ENCODE measurements at regions of chr6 and their contacts with region 1.

Region 1: DNA sequence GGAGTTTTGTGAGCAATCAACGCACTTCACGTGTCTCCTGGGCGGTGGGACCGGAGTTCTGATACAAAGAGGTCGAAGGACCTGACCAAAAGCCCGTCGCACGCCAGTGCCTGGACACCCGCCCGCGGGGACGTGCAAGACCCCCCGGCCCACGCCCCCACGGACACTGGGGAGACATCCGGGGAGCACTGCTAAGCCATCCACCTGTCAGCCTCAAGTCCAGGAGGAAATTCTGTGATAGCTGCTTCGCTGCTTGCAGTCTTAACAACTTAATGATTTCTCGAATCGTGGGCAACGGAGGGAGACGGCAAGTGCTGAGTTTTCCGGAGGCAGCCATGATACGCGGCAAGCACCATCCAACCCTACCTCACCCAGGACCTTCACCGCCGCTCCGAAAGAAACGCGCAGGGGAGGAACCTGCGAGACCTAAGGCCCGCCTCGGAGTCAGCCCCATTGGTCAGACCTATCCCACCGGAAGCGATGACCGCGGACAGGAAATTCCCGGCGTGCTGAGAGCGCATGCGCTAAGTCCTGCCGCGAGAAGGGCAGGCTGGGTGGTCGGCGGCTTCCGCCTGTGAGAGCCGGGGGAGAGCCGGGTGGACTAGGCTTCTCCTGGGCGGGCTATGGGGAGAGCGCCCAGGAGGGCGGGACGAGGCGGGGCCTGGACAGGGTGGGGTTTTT is at the start of gene TFB1M:
- DNase-seq: peak; percentile 99
- ATAC-seq: peak; percentile 96
- H3K4me3 ChIP-seq: peak within 1 kb of the TSS; percentile 88
- H3K27ac ChIP-seq: peak within 1 kb of the TSS; percentile 95
- H3K4me1 ChIP-seq: no peaks in the 10 kb centered on the region
- H3K27me3 ChIP-seq: no peaks in the 10 kb centered on the region
- CTCF ChIP-seq: no peak
- EP300 ChIP-seq: 0 out of 4 replicates have a peak, but pooled peaks of 1 of the 2 experiments have one; percentile 30
- POLR2A ChIP-seq: peak; percentile 97
- RAD21 ChIP-seq: no peak
- polyA plus RNA-seq, gene TFB1M: 95.8 to 117 TPM

Region 2: DNA sequence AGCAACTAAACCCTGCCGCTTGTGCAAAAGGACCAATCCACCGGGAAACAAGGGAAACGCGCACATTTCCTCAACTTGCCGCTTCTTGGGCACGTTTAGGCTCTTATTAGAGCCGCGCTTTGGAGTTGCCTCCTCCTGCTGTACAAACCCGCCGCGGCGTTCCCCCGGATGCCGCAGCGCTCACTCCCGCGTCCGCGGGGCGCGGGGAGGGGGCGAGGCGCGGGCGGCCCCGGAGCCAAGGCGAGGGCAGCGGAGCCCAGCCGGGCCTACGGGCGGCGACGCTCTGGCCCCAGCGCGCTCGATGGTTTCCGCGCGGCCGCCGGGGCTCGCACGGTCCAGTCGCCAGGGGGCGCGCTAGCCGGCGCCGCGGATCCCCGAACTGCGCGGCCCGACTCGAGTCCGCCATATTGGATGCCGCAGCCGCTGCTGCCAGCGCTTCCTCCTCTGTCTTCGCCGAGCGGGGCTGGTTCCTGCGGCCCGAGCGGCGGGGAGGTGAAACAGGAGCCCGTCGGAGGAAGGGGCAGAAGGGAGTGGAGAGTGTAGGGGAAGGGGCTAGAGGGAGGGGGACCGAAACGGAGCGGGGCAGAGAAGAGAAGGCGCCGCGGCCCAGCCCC is 581.1 kb before region 1 on chr6 and contains the start of gene SCAF8:
- CTCF ChIA-PET with region 1: no interaction called
- POLR2A ChIA-PET with region 1: no interaction called
- RAD21 ChIA-PET with region 1: no interaction called
- SMC1A ChIA-PET with region 1: no interaction called
- in situ Hi-C with region 1: no loop called
- intact Hi-C with region 1: loop called (anchors 10 kb)
- DNase-seq: peak; percentile 23
- ATAC-seq: peak; percentile 87
- H3K4me3 ChIP-seq: peak within 1 kb of the TSS; percentile 88
- H3K27ac ChIP-seq: peak within 1 kb of the TSS; percentile 96
- H3K4me1 ChIP-seq: peaks cover 5% of the 10 kb centered on the region; the same call in 1 of the 2 replicates
- H3K27me3 ChIP-seq: no peaks in the 10 kb centered on the region
- CTCF ChIP-seq: peak; percentile 73 to 91 (median 73); a peak in 5 of 6 replicates
- EP300 ChIP-seq: peak in 1 of 2 experiments; percentile 45; a peak in 1 of 4 replicates
- POLR2A ChIP-seq: peak; percentile 93
- RAD21 ChIP-seq: peak; percentile 50
- polyA plus RNA-seq, gene SCAF8: 8.1 to 8.5 TPM

Region 3: DNA sequence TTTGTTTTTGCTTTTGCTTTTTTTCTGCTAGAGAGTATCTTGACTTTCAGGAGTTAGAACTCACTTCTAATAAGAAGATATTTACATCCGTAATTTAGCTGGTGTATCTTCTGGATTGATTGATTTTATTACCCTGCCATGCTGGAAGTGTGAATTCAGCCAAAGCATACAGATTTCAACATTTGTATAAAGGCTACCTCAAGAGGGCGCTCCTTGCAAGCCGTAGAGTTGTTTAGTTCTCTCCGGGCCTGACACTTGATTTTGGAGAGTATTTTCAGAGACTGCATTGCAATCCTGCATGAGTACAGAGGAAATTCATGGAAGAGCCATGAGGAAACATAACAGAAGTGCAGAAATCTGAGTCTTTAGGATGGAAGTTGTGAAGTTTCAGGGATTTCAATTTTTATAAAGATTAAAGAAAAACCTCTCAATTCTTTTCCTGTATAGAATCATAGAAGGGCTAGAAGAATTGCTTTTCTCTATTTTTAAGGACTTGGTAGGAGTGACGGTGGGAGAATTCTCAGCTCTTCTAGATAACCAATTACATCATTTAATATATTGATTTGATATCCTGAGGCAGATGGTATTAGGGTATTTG is 385.8 kb before region 1 on chr6:
- CTCF ChIA-PET with region 1: interaction called, 28 read pairs
- POLR2A ChIA-PET with region 1: no interaction called
- RAD21 ChIA-PET with region 1: interaction called, 3 read pairs
- SMC1A ChIA-PET with region 1: interaction called, 4 read pairs
- in situ Hi-C with region 1: no loop called
- intact Hi-C with region 1: no loop called
- DNase-seq: peak; percentile 12
- ATAC-seq: peak; percentile 94
- H3K4me3 ChIP-seq: no peak overlapping the region
- H3K27ac ChIP-seq: no peak overlapping the region
- H3K4me1 ChIP-seq: 0 out of 2 replicates have a peak, but pooled peaks cover 2% of the 10 kb centered on the region
- H3K27me3 ChIP-seq: no peaks in the 10 kb centered on the region
- CTCF ChIP-seq: peak; percentile 72 to 90 (median 76)
- EP300 ChIP-seq: no peak
- POLR2A ChIP-seq: no peak
- RAD21 ChIP-seq: peak; percentile 98

Region 4: DNA sequence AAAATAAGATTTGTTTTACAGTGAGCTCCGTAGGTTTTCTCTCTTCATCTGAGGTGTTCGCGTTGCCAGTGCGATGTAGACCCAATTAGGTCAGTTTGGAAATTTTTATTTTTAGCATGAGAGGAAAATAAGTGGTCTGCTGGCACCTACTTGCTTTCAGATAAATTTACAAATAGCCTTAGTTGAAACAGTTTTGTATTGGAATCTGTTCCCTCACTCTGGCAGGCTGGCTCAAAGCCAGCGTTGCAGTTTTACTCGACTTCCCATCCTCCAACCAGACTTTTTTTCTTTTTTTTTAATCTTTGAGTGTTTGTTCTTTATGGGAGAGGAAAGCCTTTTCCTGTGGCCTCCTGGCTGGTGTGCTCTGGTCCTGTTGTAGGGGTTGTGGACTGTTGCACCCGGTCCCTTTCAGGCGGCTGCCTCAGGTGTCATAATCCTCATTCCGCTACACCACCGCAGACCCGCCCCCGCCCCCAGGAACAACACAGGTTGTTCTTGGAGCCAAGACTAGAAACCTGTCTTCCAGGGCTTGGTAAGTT is 272.4 kb before region 1 on chr6:
- CTCF ChIA-PET with region 1: no interaction called
- POLR2A ChIA-PET with region 1: no interaction called
- RAD21 ChIA-PET with region 1: no interaction called
- SMC1A ChIA-PET with region 1: no interaction called
- in situ Hi-C with region 1: no loop called
- intact Hi-C with region 1: no loop called
- DNase-seq: no peak
- ATAC-seq: no peak
- H3K4me3 ChIP-seq: no peak overlapping the region
- H3K27ac ChIP-seq: no peak overlapping the region
- H3K4me1 ChIP-seq: no peaks in the 10 kb centered on the region
- H3K27me3 ChIP-seq: no peaks in the 10 kb centered on the region; a peak in 1 of 4 replicates
- CTCF ChIP-seq: no peak
- EP300 ChIP-seq: no peak
- POLR2A ChIP-seq: no peak
- RAD21 ChIP-seq: no peak

Region 5: DNA sequence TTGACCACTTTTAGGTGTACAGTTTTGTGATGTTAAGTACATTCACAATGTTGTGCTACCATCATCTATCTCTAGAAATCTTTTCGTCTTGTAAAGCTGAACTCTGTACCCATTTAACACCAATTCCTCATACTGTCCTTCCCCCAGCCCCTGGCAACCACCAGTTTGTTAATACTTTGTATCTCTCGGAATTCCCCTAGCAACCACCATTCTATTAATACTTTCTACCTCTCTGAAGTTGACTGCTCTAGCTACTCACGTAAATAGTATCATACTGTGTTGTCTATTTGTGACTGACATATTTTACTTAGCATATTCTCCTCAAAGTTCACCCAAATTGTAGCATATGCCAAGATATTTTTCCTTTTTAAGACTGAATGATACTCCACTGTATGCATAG is 132.7 kb before region 1 on chr6:
- CTCF ChIA-PET with region 1: interaction called, 54 read pairs
- POLR2A ChIA-PET with region 1: interaction called, 6 read pairs
- RAD21 ChIA-PET with region 1: interaction called, 54 read pairs
- SMC1A ChIA-PET with region 1: interaction called, 51 read pairs
- in situ Hi-C with region 1: no loop called
- intact Hi-C with region 1: loop called (anchors 2 kb)
- DNase-seq: no peak
- ATAC-seq: peak; percentile 60
- H3K4me3 ChIP-seq: 0 out of 2 replicates have a peak overlapping the region, but pooled peaks have one; percentile 16
- H3K27ac ChIP-seq: peak overlapping the region; percentile 81
- H3K4me1 ChIP-seq: peaks cover 22% of the 10 kb centered on the region
- H3K27me3 ChIP-seq: no peaks in the 10 kb centered on the region
- CTCF ChIP-seq: no peak
- EP300 ChIP-seq: peak; percentile 66 to 88
- POLR2A ChIP-seq: no peak
- RAD21 ChIP-seq: no peak

Region 6: DNA sequence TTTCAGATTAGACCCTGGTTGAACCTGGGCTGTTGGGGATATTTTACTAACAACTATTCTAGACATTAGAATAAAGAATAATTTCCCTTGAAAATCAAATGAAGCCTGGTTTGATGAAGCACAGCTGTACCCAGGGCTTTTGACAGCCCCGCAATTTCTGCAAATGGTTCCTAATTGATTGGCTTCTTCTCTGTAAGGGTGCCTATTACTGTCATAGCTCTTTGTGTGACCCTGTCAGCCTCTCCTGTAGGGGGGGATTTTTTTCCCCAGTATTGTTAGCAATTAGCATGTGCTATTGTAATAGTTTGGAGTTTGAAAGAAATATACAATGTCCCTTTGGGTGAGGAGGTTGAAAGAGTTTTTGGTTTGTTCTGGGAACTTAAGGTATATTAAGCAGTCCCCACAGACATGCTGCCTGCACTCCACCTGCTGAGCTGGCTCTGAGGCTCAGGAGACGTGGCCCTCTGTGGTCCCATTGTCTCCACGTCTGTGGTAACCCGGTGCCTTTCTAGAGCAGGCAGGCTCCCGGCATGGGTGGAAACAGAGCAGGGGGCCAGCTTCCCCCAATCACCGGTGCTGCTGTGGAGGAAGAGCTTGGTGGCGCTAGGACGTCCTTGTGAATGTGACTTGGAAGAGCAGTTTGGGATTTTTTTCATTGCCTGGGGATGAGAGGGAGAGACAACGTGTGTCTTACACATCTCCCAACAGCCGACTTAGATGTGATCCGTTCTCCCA is 97.8 kb before region 1 on chr6:
- CTCF ChIA-PET with region 1: no interaction called
- POLR2A ChIA-PET with region 1: no interaction called
- RAD21 ChIA-PET with region 1: no interaction called
- SMC1A ChIA-PET with region 1: no interaction called
- in situ Hi-C with region 1: no loop called
- intact Hi-C with region 1: no loop called
- DNase-seq: no peak
- ATAC-seq: no peak; the same call in 2 of the 3 replicates
- H3K4me3 ChIP-seq: no peak overlapping the region
- H3K27ac ChIP-seq: no peak overlapping the region
- H3K4me1 ChIP-seq: no peaks in the 10 kb centered on the region
- H3K27me3 ChIP-seq: no peaks in the 10 kb centered on the region
- CTCF ChIP-seq: no peak
- EP300 ChIP-seq: no peak
- POLR2A ChIP-seq: no peak
- RAD21 ChIP-seq: no peak

Region 7: GRCh38 chr6:155340464-155341129 is 26.4 kb after region 1 on chr6:
- CTCF ChIA-PET with region 1: interaction called, 6 read pairs
- POLR2A ChIA-PET with region 1: interaction called, 4 read pairs
- RAD21 ChIA-PET with region 1: no interaction called
- SMC1A ChIA-PET with region 1: interaction called, 32 read pairs
- in situ Hi-C with region 1: no loop called
- intact Hi-C with region 1: no loop called
- DNase-seq: no peak
- ATAC-seq: peak; percentile 64
- H3K4me3 ChIP-seq: no peak overlapping the region
- H3K27ac ChIP-seq: peak overlapping the region; percentile 67
- H3K4me1 ChIP-seq: peaks cover 17% of the 10 kb centered on the region
- H3K27me3 ChIP-seq: no peaks in the 10 kb centered on the region
- CTCF ChIP-seq: peak in 2 of 3 experiments; percentile 14 to 26; a peak in 2 of 6 replicates
- EP300 ChIP-seq: no peak
- POLR2A ChIP-seq: no peak
- RAD21 ChIP-seq: peak; percentile 56

Region 8: GRCh38 chr6:155418017-155418761 is 104.0 kb after region 1 on chr6:
- CTCF ChIA-PET with region 1: interaction called, 3 read pairs
- POLR2A ChIA-PET with region 1: interaction called, 5 read pairs
- RAD21 ChIA-PET with region 1: interaction called, 11 read pairs
- SMC1A ChIA-PET with region 1: interaction called, 7 read pairs
- in situ Hi-C with region 1: no loop called
- intact Hi-C with region 1: no loop called
- DNase-seq: peak; percentile 68
- ATAC-seq: peak; percentile 85
- H3K4me3 ChIP-seq: peak overlapping the region; percentile 37
- H3K27ac ChIP-seq: peak overlapping the region; percentile 79
- H3K4me1 ChIP-seq: peaks cover 29% of the 10 kb centered on the region
- H3K27me3 ChIP-seq: no peaks in the 10 kb centered on the region
- CTCF ChIP-seq: no peak
- EP300 ChIP-seq: no peak; a peak in 1 of 4 replicates
- POLR2A ChIP-seq: no peak
- RAD21 ChIP-seq: no peak